CD4-positive, alpha-beta T cell (primary cell): ENCODE measurements at regions of chr1 and their contacts with region 1.

Region 1: GRCh38 chr1:50793521-50793920 is 166.5 kb downstream of the FAF1 start:
- DNase-seq: no peak
- ATAC-seq: no peak
- H3K4me3 ChIP-seq: no peak overlapping the region
- H3K4me3 Mint-ChIP-seq: no peak overlapping the region
- H3K27ac ChIP-seq: no peak overlapping the region
- H3K27ac Mint-ChIP-seq: no peak overlapping the region
- H3K4me1 ChIP-seq: no peaks in the 10 kb centered on the region
- H3K4me1 Mint-ChIP-seq: no peaks in the 10 kb centered on the region
- H3K27me3 ChIP-seq: no peaks in the 10 kb centered on the region
- H3K27me3 Mint-ChIP-seq: no peaks in the 10 kb centered on the region
- CTCF ChIP-seq: no peak

Region 2: GRCh38 chr1:49597436-49597835 is 1196.1 kb before region 1 on chr1:
- CTCF ChIA-PET with region 1: no interaction called
- POLR2A ChIA-PET with region 1: no interaction called
- intact Hi-C with region 1: no loop called
- DNase-seq: no peak
- ATAC-seq: no peak
- H3K4me3 ChIP-seq: no peak overlapping the region
- H3K4me3 Mint-ChIP-seq: no peak overlapping the region
- H3K27ac ChIP-seq: no peak overlapping the region
- H3K27ac Mint-ChIP-seq: no peak overlapping the region
- H3K4me1 ChIP-seq: no peaks in the 10 kb centered on the region
- H3K4me1 Mint-ChIP-seq: no peaks in the 10 kb centered on the region
- H3K27me3 ChIP-seq: no peaks in the 10 kb centered on the region
- H3K27me3 Mint-ChIP-seq: no peaks in the 10 kb centered on the region
- CTCF ChIP-seq: no peak

Region 3: GRCh38 chr1:50704126-50704525 is 89.4 kb before region 1 on chr1:
- CTCF ChIA-PET with region 1: no interaction called
- POLR2A ChIA-PET with region 1: no interaction called
- intact Hi-C with region 1: no loop called
- DNase-seq: peak in 3 of 14 experiments; percentile 30 to 39 (median 35)
- ATAC-seq: no peak
- H3K4me3 ChIP-seq: no peak overlapping the region
- H3K4me3 Mint-ChIP-seq: no peak overlapping the region
- H3K27ac ChIP-seq: no peak overlapping the region
- H3K27ac Mint-ChIP-seq: no peak overlapping the region
- H3K4me1 ChIP-seq: no peaks in the 10 kb centered on the region
- H3K4me1 Mint-ChIP-seq: peaks cover 4% of the 10 kb centered on the region
- H3K27me3 ChIP-seq: no peaks in the 10 kb centered on the region
- H3K27me3 Mint-ChIP-seq: no peaks in the 10 kb centered on the region
- CTCF ChIP-seq: peak; percentile 71

Region 4: GRCh38 chr1:50766688-50767087 is 26.8 kb before region 1 on chr1:
- CTCF ChIA-PET with region 1: no interaction called
- POLR2A ChIA-PET with region 1: interaction called, 3 read pairs
- intact Hi-C with region 1: loop called in 1 of 2 experiments (anchors 2 kb)
- DNase-seq: no peak
- ATAC-seq: no peak
- H3K4me3 ChIP-seq: no peak overlapping the region
- H3K4me3 Mint-ChIP-seq: no peak overlapping the region
- H3K27ac ChIP-seq: no peak overlapping the region
- H3K27ac Mint-ChIP-seq: no peak overlapping the region
- H3K4me1 ChIP-seq: no peaks in the 10 kb centered on the region
- H3K4me1 Mint-ChIP-seq: peaks cover 40% of the 10 kb centered on the region
- H3K27me3 ChIP-seq: no peaks in the 10 kb centered on the region
- H3K27me3 Mint-ChIP-seq: no peaks in the 10 kb centered on the region
- CTCF ChIP-seq: no peak